ENCODE measurements at regions of chr1 and their contacts with region 1.

Region 1: DNA sequence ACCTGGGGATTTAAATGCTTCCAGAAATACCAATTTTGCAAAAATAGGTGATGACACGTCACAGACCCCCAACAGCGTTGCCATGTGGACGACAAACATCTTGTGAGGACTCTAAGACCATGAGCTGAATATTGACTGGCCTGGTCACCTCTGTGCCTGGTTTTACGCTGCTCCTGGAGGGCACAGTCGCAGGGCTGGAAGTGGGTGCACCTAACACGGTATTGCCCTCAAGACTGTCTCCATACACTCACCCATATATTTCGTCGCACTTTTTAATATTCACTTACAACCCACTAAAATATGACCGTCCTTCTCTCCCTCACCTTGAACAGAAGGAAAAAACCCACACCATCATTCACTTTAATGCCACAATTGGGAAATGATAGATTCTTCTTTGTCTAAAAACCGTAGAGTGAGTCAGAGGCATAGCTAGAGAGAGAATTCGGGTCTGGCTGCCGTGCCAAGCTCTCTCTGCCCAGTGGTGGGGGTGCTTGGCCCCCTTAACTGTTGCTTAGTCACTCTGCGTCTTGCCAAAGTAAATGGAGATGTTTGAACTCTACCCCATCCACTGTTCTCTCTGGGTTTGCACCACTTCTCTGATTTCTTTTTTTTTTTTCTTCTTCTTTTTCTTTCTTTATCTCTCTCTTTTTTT is 40.8 kb upstream of the UTS2 start:
- DNase-seq: no peak
- H3K4me3 ChIP-seq: no peak overlapping the region
- H3K27ac ChIP-seq: no peak overlapping the region
- H3K4me1 ChIP-seq: no peaks in the 10 kb centered on the region
- H3K27me3 ChIP-seq: peaks cover 8% of the 10 kb centered on the region
- CTCF ChIP-seq: no peak
- EP300 ChIP-seq: no peak
- POLR2A ChIP-seq: no peak

Region 2: DNA sequence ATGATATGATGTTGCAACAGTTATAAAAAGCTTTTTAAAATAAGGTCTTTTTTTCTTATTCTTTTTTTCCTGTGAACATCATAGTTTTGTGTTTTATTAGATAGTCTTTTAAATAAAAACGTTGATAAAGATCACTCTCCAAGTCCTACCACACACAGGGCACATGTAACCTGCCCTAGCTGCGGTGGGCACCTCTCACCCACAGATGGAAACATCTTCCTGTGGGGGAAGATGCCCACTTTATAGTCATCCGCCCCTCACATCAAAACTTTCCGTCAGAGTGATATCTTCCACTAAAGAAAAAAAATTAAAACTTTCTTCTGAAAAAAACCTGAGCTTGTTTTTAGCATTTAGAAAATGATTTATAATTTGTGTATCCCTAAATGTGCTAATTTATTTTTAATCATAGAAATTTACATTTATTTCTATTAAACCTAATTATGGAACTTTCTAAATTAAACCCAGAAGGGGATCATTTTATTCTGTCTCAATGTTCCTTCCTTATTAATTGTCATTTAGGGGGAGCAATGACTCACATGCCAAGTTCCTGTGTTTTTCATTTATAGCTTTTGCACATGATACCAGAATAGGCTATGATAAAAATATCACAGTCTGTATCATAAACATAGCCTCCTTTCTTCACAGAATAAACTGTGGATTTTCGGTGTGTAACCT is 22.3 kb after region 1 on chr1:
- in situ Hi-C with region 1: no loop called
- intact Hi-C with region 1: loop called (anchors 1 kb)
- DNase-seq: no peak
- H3K4me3 ChIP-seq: no peak overlapping the region
- H3K27ac ChIP-seq: no peak overlapping the region
- H3K4me1 ChIP-seq: no peaks in the 10 kb centered on the region
- H3K27me3 ChIP-seq: no peaks in the 10 kb centered on the region
- CTCF ChIP-seq: no peak
- EP300 ChIP-seq: no peak
- POLR2A ChIP-seq: no peak